Activated T-helper 1 cell treated with anti-CD3 and anti-CD28 coated beads, Interleukin-12 subunit alpha, Interleukin-12 subunit beta, Interleukin-2, Interleukin-4 antibody, amounts not matched to agents 30 ng/mL and 10 ng/mL and 1 ng/mL, durations not matched to agents 14 hours and 24 hours and 36 hours (primary cell): ENCODE measurements at regions of chr10 and their contacts with region 1.

Region 1: GRCh38 chr10:62050893-62051433 is 149.5 kb downstream of the ARID5B start:
- DNase-seq: peak; percentile 77
- H3K4me3 Mint-ChIP-seq: peak overlapping the region; percentile 96
- H3K27ac Mint-ChIP-seq: peak overlapping the region; percentile 99
- H3K4me1 Mint-ChIP-seq: peaks cover 86% of the 10 kb centered on the region
- H3K27me3 Mint-ChIP-seq: no peaks in the 10 kb centered on the region

Region 2: DNA sequence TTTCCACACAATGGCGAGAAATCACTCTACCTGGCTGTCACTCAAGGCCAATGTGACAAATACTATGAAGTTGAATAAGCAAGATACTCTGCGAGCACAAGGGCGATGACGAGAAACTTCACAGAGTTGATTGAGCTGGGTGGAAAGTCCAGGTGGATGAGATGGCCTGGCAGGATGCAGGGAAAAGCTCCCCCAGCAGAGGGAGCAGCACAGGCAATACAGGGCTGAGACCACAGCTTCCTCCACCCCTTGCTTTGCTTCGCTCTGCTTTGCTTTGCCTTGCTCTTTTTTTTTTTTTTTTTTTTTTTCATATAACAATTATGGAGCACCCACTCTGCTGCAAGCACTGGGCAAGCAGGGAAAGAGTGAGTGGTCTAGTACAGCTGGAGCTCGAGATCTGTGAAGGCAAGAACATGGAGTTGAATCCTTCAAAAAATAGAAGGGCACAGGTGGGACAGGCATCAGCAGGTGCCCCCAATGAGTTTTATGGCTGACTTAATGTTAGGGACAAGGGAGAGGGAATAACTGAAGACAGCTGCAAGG is 300.0 kb before region 1 on chr10:
- intact Hi-C with region 1: loop called (anchors 10 kb)
- DNase-seq: peak; percentile 53
- H3K4me3 Mint-ChIP-seq: no peak overlapping the region
- H3K27ac Mint-ChIP-seq: peak overlapping the region; percentile 35
- H3K4me1 Mint-ChIP-seq: peaks cover 23% of the 10 kb centered on the region
- H3K27me3 Mint-ChIP-seq: no peaks in the 10 kb centered on the region

Region 3: DNA sequence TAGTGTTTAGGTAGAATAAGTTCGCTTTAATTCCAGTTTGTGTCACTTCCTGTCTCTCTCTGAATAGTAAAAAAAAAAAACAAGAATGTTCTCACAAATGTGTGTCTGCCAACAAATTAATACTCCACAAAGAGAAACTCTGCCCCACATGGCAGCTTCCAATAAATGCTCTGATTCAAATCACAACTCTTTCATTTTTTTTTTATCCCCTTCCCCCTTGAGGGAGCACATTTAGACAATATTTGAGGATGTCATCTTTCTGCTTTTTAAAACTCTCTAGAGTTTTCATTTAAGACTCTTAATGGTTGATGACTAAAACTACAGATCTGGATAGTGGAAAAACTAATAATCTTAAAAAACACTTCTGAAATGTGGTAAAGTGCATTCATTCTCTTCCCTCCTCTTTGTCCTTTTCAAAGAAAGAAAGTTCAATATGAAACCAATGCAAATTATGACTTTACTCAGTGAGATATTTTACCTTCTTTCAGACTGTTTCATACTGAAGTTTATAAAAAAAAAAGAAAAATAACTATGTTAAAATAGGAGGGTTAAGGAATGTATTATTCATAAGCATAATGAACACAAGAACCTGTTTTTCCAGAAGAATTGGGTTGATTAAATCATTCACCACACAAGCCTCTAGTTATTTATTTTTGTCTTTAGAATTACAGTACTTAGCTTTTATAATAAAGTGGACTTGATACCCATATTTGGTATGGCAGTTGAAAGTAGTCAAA is 107.1 kb before region 1 on chr10:
- intact Hi-C with region 1: loop called (anchors 1 kb)
- DNase-seq: no peak
- H3K4me3 Mint-ChIP-seq: peak overlapping the region; percentile 77
- H3K27ac Mint-ChIP-seq: peak overlapping the region; percentile 95
- H3K4me1 Mint-ChIP-seq: peaks cover 58% of the 10 kb centered on the region
- H3K27me3 Mint-ChIP-seq: no peaks in the 10 kb centered on the region

Region 4: DNA sequence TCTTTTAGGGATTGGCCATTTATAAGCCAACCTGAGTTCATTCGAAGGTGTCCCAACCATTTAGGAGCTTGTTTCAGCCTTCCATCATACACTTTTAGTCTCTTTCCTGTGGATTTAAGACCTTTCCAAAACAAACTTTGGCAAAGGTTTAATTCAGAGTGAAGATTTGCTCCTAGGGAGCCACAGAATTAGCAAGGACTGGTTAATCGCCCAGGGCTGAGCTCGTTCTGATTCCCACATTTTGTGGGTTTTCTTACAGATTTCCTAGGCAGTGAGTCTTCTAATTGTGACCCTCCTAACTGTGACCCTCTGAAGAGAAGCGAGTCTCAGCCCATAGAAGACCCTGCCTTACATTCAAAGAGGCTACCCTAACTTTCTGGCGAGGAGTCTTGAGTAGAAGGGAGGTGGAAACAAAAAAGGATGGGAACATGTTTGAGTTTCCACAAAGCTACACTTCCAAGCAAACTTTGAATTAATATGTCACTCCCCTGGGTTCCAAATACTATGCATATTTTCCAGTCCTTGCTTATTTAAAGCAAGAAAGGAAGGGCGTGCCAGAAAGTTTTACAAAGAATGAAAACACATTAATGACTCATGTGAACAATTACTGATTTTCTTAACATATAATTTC is 31.2 kb before region 1 on chr10:
- intact Hi-C with region 1: loop called (anchors 1 kb)
- DNase-seq: no peak
- H3K4me3 Mint-ChIP-seq: peak overlapping the region; percentile 61
- H3K27ac Mint-ChIP-seq: peak overlapping the region; percentile 94
- H3K4me1 Mint-ChIP-seq: peaks cover 66% of the 10 kb centered on the region
- H3K27me3 Mint-ChIP-seq: no peaks in the 10 kb centered on the region

Region 5: GRCh38 chr10:62082729-62083411 is 31.9 kb after region 1 on chr10:
- intact Hi-C with region 1: loop called (anchors 1 kb)
- DNase-seq: peak; percentile 26
- H3K4me3 Mint-ChIP-seq: peak overlapping the region; percentile 78
- H3K27ac Mint-ChIP-seq: peak overlapping the region; percentile 84
- H3K4me1 Mint-ChIP-seq: peaks cover 72% of the 10 kb centered on the region
- H3K27me3 Mint-ChIP-seq: no peaks in the 10 kb centered on the region

Region 6: DNA sequence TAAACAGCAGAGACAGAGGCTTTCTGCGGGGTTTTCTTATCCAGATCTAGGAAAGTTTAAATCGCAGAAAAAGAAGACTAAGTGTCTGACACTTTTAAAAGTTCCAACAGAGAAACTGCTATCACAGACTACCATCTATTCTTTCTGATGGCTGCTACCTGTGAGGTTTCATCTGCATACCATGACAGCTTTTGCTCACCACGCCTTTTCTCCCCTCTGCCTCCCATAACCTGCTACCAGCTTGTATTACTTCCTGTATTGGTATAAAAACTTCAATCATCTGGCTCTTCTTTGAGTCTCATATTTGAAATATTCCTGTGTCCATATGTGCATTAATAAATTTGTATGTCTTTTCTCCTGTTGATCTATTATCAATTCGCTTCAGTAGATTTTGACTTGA is 251.8 kb after region 1 on chr10:
- intact Hi-C with region 1: no loop called
- DNase-seq: no peak
- H3K4me3 Mint-ChIP-seq: no peak overlapping the region
- H3K27ac Mint-ChIP-seq: no peak overlapping the region
- H3K4me1 Mint-ChIP-seq: no peaks in the 10 kb centered on the region
- H3K27me3 Mint-ChIP-seq: peaks cover 3% of the 10 kb centered on the region

Region 7: GRCh38 chr10:62352356-62352970 is 301.5 kb after region 1 on chr10:
- intact Hi-C with region 1: loop called (anchors 5 kb)
- DNase-seq: no peak
- H3K4me3 Mint-ChIP-seq: no peak overlapping the region
- H3K27ac Mint-ChIP-seq: peak overlapping the region; percentile 7
- H3K4me1 Mint-ChIP-seq: peaks cover 11% of the 10 kb centered on the region
- H3K27me3 Mint-ChIP-seq: peaks cover 3% of the 10 kb centered on the region

Region 8: DNA sequence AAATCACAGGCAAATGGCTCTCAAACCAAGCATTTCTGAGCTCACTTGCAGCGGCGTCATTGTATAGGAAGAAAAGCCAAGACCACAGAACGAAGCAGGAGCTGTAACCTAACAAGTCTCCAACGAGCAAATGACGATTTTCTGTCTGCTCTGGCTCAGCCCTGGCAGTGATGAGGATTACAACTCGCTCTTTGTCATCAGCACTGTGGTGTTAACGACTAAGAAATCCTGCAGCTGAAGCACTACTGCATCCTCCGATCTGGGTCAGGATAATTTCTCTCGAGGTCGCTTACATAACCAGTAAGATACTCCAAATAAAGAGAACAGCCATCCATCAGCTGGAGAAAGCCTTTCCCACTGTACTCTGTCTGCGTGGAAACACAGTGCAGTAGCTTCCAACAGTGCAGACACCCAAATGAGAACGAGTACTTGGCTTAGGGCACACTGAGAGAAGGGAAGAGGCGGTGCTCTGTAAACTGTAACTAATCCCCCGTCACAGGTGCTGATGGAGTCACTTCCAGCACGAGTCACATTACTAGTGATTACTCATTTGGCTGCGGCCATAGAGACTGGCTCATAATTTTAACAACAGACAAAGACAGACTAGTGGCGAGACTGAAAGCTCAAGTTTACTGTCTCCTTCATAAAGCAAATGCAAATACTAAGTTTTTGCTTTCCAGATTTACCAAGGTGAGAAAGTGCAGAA is 1218.0 kb after region 1 on chr10:
- intact Hi-C with region 1: loop called (anchors 2 kb)
- DNase-seq: peak; percentile 81
- H3K4me3 Mint-ChIP-seq: peak overlapping the region; percentile 95
- H3K27ac Mint-ChIP-seq: peak overlapping the region; percentile 98
- H3K4me1 Mint-ChIP-seq: peaks cover 31% of the 10 kb centered on the region
- H3K27me3 Mint-ChIP-seq: no peaks in the 10 kb centered on the region